Activated CD4-positive, alpha-beta memory T cell treated with anti-CD3 and anti-CD28 coated beads for 36 hours (primary cell): ENCODE measurements at regions of chr1 and their contacts with region 1.

Region 1: GRCh38 chr1:43991476-43992231 is at the start of gene CCDC24:
- DNase-seq: peak; percentile 84
- H3K4me3 Mint-ChIP-seq: peak within 1 kb of the TSS; percentile 86
- H3K27ac Mint-ChIP-seq: peak within 1 kb of the TSS; percentile 56
- H3K4me1 Mint-ChIP-seq: peaks cover 11% of the 10 kb centered on the region
- H3K27me3 Mint-ChIP-seq: no peaks in the 10 kb centered on the region
- total RNA-seq, gene CCDC24: 2.7 to 2.8 TPM

Region 2: GRCh38 chr1:43924516-43924915 is 67.1 kb before region 1 on chr1:
- CTCF ChIA-PET with region 1: no interaction called
- POLR2A ChIA-PET with region 1: no interaction called
- intact Hi-C with region 1: no loop called
- DNase-seq: no peak
- H3K4me3 Mint-ChIP-seq: no peak overlapping the region
- H3K27ac Mint-ChIP-seq: no peak overlapping the region
- H3K4me1 Mint-ChIP-seq: peaks cover under 1% of the 10 kb centered on the region
- H3K27me3 Mint-ChIP-seq: no peaks in the 10 kb centered on the region

Region 3: DNA sequence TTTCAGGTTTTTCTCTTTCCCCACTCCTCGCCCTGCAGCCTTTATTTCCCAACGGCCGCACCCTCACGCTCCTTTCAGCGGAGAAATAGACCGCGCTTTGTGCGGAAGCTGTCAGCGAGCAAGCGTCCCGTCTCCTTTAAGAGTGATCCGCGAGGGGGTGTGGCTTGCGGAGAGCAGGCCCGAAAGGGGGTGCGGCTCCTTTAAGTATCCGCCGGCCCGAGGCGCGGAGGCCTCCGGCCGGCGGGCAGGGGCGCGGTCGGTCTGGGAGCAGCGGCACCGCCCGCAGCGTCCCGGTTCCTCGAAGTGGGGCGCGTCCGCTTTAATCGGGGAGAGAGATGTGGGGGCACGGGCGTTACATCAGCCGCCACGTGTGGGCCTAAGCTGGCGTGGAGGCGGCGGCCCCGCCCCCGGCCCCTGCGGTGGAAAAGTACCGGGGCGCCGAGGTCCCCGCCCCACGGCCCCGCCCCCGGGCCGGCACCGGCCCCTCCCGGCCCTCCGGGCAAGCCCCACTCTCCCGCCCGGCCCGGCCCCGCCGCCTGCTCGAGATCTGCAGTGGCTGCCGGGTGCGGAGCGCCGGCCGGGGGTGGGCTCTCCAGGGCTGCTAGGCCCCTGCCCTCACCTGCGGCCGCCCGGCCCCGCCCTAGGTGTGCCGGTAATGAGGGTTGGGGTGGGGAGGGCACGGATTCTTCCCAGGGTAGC is 38.4 kb after region 1 on chr1:
- CTCF ChIA-PET with region 1: no interaction called
- POLR2A ChIA-PET with region 1: no interaction called
- intact Hi-C with region 1: loop called (anchors 5 kb)
- DNase-seq: peak; percentile 92
- H3K4me3 Mint-ChIP-seq: peak overlapping the region; percentile 94
- H3K27ac Mint-ChIP-seq: peak overlapping the region; percentile 95
- H3K4me1 Mint-ChIP-seq: peaks cover 13% of the 10 kb centered on the region
- H3K27me3 Mint-ChIP-seq: no peaks in the 10 kb centered on the region